ENCODE measurements at regions of chr3 and their contacts with region 1.

Region 1: GRCh38 chr3:26596335-26596734 is 26.2 kb upstream of the LRRC3B start:
- DNase-seq: no peak
- ATAC-seq: no peak
- H3K4me3 ChIP-seq: no peak overlapping the region
- H3K27ac ChIP-seq: no peak overlapping the region
- H3K4me1 ChIP-seq: no peaks in the 10 kb centered on the region
- H3K27me3 ChIP-seq: no peaks in the 10 kb centered on the region
- CTCF ChIP-seq: no peak

Region 2: GRCh38 chr3:26247712-26248111 is 348.6 kb before region 1 on chr3:
- CTCF ChIA-PET with region 1: no interaction called
- POLR2A ChIA-PET with region 1: no interaction called
- in situ Hi-C with region 1: no loop called
- intact Hi-C with region 1: no loop called
- DNase-seq: no peak
- ATAC-seq: no peak
- H3K4me3 ChIP-seq: no peak overlapping the region
- H3K27ac ChIP-seq: no peak overlapping the region
- H3K4me1 ChIP-seq: no peaks in the 10 kb centered on the region
- H3K27me3 ChIP-seq: no peaks in the 10 kb centered on the region
- CTCF ChIP-seq: no peak

Region 3: GRCh38 chr3:26559227-26559626 is 37.1 kb before region 1 on chr3:
- CTCF ChIA-PET with region 1: no interaction called
- POLR2A ChIA-PET with region 1: no interaction called
- in situ Hi-C with region 1: no loop called
- intact Hi-C with region 1: loop called (anchors 2 kb)
- DNase-seq: no peak
- ATAC-seq: no peak
- H3K4me3 ChIP-seq: no peak overlapping the region
- H3K27ac ChIP-seq: no peak overlapping the region
- H3K4me1 ChIP-seq: no peaks in the 10 kb centered on the region
- H3K27me3 ChIP-seq: no peaks in the 10 kb centered on the region
- CTCF ChIP-seq: no peak

Region 4: GRCh38 chr3:26579116-26579515 is 17.2 kb before region 1 on chr3:
- CTCF ChIA-PET with region 1: no interaction called
- POLR2A ChIA-PET with region 1: no interaction called
- in situ Hi-C with region 1: no loop called
- intact Hi-C with region 1: no loop called
- DNase-seq: no peak
- ATAC-seq: no peak
- H3K4me3 ChIP-seq: no peak overlapping the region
- H3K27ac ChIP-seq: no peak overlapping the region
- H3K4me1 ChIP-seq: no peaks in the 10 kb centered on the region
- H3K27me3 ChIP-seq: no peaks in the 10 kb centered on the region
- CTCF ChIP-seq: no peak

Region 5: GRCh38 chr3:26699553-26699952 is 103.2 kb after region 1 on chr3:
- CTCF ChIA-PET with region 1: no interaction called
- POLR2A ChIA-PET with region 1: no interaction called
- in situ Hi-C with region 1: no loop called
- intact Hi-C with region 1: no loop called
- DNase-seq: no peak
- ATAC-seq: no peak
- H3K4me3 ChIP-seq: no peak overlapping the region
- H3K27ac ChIP-seq: no peak overlapping the region
- H3K4me1 ChIP-seq: no peaks in the 10 kb centered on the region
- H3K27me3 ChIP-seq: no peaks in the 10 kb centered on the region
- CTCF ChIP-seq: no peak

Measured in Panc1 (cell line).